ENCODE measurements at regions of chr17 and their contacts with region 1.

Region 1: DNA sequence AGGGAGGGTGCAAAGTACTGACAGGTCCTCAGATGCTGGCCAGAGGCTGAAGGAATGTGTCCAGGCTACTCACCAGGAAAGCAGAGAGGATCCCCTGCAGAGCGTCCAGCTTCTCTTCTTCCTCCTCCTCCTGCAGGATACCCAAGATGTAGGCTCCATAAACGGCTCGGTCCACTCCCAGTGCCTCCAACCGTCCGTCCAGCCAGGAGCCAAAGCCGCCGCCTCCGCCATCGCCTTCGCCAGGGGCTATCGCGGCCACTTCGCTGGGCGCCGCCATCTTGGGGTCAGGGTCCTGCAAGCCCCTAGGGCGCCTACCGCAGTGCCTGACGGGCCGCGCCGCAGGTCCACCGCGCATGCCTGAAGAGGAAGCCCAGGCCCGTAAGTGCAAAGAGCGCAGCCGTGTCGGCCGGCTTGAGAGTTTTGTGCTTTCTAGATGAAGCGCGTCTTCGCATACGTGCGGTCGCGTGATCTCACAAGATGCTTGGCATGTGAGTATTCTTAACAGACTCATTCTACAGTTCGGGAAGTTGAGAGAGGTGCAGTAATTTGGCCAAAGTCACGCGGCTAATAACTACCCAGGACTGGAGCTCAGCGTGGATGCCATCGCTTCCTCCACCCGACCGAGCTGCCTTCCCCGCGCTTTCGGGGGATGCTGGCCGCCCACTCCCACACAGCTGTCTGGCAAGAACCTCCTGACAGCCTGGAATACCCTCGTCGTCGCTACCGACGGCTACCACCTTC is at the start of gene CCDC43:
- DNase-seq: peak; percentile 90
- H3K4me3 Mint-ChIP-seq: peak within 1 kb of the TSS; percentile 99
- H3K27ac Mint-ChIP-seq: peak within 1 kb of the TSS; percentile 97
- H3K4me1 Mint-ChIP-seq: peaks cover 22% of the 10 kb centered on the region
- H3K27me3 Mint-ChIP-seq: no peaks in the 10 kb centered on the region
- total RNA-seq, gene CCDC43: 39.7 and 40.9 TPM in 2 replicates

Region 2: DNA sequence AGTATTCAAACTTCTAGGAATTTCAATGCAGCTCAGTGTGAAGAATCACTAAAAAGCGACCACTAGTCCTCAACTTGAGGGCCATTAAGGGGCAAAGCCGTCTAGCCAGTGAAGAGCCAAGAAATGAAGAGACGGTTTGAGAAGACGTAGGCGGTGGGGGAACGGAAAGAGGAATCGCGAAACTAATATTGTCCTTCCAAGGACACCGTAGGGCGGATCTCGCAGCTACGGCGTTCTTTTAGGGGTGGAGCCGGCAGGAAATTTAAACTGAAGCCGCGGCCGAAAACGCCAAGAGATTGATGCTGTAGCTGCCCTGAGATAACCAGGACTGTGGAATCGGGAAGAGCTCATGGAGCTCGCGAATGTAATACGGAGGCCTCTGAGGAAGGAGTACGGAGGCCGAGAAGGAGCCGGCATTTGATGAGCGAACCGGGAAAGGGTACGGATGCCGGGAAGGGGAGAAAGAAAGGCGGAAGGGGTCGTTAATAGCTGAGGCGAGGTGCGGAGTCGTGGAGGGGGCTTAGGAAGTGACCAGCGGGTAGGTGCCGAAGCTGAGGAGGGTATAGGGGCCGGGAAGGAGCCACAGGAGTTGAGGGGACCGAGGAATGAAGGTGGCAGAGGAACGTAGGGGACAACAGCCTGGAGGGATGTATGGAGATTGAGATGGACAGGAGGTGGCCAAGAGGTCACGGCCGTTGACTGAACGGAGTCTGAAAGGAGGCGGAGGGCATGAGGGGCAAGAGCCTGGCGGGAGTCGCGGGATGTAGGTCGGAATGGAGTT is 18.9 kb after region 1 on chr17 and contains the start of gene DBF4B:
- intact Hi-C with region 1: loop called (anchors 1 kb)
- DNase-seq: peak; percentile 81
- H3K4me3 Mint-ChIP-seq: no peak within 1 kb of the TSS
- H3K27ac Mint-ChIP-seq: no peak within 1 kb of the TSS
- H3K4me1 Mint-ChIP-seq: peaks cover 6% of the 10 kb centered on the region
- H3K27me3 Mint-ChIP-seq: peaks cover 6% of the 10 kb centered on the region
- total RNA-seq, gene DBF4B: 22.8 and 24.4 TPM in 2 replicates

Region 3: GRCh38 chr17:44758414-44759085 is 68.9 kb after region 1 on chr17 and contains the start of gene ADAM11:
- intact Hi-C with region 1: no loop called
- DNase-seq: no peak
- H3K4me3 Mint-ChIP-seq: peak within 1 kb of the TSS; percentile 5
- H3K27ac Mint-ChIP-seq: no peak within 1 kb of the TSS
- H3K4me1 Mint-ChIP-seq: no peaks in the 10 kb centered on the region
- H3K27me3 Mint-ChIP-seq: peaks cover 31% of the 10 kb centered on the region
- total RNA-seq, gene ADAM11: 0.09 and 0.14 TPM in 2 replicates

Region 4: DNA sequence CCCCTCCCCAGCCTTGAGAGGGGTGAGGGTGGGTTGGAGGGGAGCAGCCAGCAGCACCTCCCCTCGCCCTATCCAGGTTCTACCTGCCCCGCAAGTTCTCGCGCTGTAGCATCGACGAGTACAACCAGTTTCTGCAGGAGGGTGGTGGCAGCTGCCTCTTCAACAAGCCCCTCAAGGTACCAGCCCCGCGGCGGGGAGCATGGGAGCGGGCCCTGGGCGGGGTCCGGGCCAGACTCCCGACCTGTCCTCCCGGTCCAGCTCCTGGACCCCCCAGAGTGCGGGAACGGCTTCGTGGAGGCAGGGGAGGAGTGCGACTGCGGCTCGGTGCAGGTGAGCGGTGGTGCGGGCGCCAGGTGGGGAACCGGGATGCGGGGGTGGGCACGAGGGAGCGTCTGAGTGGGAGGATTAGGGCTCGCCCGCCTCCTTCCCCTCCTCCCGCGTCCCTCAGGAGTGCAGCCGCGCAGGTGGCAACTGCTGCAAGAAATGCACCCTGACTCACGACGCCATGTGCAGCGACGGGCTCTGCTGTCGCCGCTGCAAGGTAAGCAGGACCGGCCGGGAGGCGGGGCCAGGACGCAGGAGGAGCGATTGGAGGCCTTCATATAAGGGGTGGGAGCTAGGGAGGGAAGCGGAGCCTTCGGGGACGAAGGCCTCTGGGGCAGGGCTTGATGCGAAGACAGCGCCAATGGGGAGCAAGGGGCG is 85.6 kb after region 1 on chr17:
- intact Hi-C with region 1: no loop called
- DNase-seq: peak; percentile 97
- H3K4me3 Mint-ChIP-seq: peak overlapping the region; percentile 83
- H3K27ac Mint-ChIP-seq: no peak overlapping the region
- H3K4me1 Mint-ChIP-seq: peaks cover 7% of the 10 kb centered on the region
- H3K27me3 Mint-ChIP-seq: peaks cover 10% of the 10 kb centered on the region

Region 5: GRCh38 chr17:44794851-44795413 is 105.3 kb after region 1 on chr17:
- intact Hi-C with region 1: no loop called
- DNase-seq: no peak
- H3K4me3 Mint-ChIP-seq: no peak overlapping the region
- H3K27ac Mint-ChIP-seq: peak overlapping the region; percentile 9
- H3K4me1 Mint-ChIP-seq: peaks cover 14% of the 10 kb centered on the region
- H3K27me3 Mint-ChIP-seq: no peaks in the 10 kb centered on the region

Region 6: DNA sequence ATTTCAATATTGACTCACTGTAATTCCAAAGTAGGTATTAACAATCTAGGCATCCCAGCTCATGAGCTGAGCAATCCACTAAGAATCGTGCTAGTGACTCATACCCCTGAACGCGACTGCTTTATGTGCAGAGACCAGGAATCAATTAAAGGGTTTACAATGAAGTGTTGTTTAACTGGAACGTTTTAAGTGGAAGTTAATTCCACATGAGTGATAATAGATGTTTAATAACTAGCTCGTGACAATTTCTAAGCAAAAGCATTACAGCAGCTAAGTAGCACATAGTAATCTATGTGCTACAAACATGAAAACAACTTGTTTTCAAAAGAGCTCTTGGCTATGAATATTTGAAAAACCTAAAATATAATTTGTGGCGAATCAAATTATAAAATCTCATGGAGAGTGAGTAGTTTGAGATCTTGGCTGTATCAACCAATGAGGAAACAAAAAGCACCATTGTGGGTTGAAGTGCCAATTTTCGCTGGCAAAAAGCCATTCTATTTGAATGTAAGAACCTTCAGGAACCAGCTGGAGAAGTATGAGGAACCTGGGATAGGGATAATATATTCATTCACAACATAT is 131.1 kb after region 1 on chr17:
- intact Hi-C with region 1: no loop called
- DNase-seq: no peak
- H3K4me3 Mint-ChIP-seq: no peak overlapping the region
- H3K27ac Mint-ChIP-seq: no peak overlapping the region
- H3K4me1 Mint-ChIP-seq: no peaks in the 10 kb centered on the region
- H3K27me3 Mint-ChIP-seq: peaks cover 4% of the 10 kb centered on the region